ENCODE measurements at regions of chr20 and their contacts with region 1.

Region 1: DNA sequence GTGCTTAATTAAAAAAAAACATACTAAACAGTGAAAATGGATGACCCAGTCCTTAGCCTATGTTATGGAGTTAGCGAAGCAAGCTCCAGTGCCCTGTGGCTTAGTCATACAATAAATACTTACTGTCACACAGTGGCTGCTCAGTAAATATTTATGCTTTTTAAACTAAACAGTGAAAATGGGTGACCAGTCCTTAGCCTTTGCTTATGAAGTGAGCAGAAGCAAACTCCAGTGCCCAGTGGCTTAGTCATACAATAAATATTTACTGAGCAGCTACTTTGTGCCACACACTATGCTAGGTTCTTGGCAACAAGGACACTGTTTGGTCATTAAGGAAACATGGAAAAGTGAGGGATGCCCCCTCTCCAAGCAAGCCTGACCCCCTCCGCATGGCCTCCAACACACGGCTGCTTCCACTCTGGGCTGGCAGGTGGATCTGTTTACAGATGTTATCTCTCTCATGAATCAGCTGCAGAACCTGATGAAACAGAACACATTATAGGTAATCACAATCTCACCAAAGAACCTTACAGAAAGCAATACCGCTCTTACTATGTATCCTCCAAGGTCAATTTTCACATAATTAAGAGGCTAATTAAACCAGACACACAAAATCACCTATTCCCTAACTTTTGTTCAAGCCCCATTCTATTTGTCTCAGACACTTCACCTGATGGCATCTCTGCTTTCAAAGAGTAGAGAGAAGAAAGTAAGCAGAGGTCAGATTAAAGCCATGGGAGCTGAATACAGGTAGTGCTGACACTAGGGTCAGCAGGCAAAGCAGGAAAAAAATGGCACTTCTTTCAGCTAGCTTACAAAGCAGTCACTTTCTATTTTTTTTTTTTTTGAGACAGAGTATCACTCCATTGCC is 27.3 kb downstream of the CDK5RAP1 start:
- DNase-seq: peak; percentile 69 to 97
- H3K4me3 ChIP-seq: no peak overlapping the region
- H3K27ac ChIP-seq: peak overlapping the region; percentile 85
- H3K4me1 ChIP-seq: peaks cover 41% of the 10 kb centered on the region
- H3K27me3 ChIP-seq: no peaks in the 10 kb centered on the region
- CTCF ChIP-seq: no peak

Region 2: DNA sequence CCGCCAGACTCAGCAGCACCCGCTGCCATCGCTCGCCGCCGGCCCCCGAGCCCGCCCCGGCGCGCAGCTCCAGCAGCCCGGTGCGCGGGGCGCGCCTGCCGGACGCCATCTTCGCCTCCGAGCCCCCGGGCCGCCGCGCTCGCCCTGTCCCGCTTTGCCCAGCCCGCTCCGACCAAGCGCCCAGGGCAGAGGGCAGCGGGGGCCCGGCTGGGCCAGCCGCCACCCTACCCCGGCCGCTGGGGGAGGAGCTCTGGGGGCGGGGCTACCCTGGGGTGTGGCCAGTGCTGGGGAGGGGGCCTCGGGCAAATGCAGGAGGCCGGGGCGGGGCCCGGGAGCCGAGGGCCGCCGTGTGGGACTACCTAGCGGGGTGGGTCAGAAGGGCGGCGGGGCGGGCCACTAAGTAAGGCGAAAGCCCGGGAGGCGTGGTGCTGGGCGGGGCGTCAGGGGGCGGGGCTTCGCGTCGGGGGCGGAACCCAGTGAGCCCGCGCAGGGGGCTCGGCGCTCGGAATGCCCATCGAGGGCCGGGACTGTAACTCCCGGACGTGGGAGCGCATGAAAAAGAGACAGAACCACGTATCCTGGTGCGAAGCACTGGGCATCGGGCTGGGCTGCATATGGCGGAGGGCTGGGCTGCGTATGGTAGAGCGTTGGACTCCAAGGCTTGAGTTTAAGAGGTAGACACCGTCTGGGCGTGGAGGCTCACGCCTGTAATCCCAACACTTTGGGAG is 69.7 kb after region 1 on chr20 and contains the start of gene SNTA1:
- CTCF ChIA-PET with region 1: no interaction called
- POLR2A ChIA-PET with region 1: interaction called, 32 read pairs
- intact Hi-C with region 1: no loop called
- DNase-seq: peak; percentile 71 to 94
- H3K4me3 ChIP-seq: peak within 1 kb of the TSS; percentile 71
- H3K27ac ChIP-seq: no peak within 1 kb of the TSS
- H3K4me1 ChIP-seq: peaks cover 4% of the 10 kb centered on the region; the same call in 1 of the 2 replicates
- H3K27me3 ChIP-seq: no peaks in the 10 kb centered on the region
- CTCF ChIP-seq: no peak
- total RNA-seq, gene SNTA1: 7.6 and 10.1 TPM in 2 replicates

Region 3: DNA sequence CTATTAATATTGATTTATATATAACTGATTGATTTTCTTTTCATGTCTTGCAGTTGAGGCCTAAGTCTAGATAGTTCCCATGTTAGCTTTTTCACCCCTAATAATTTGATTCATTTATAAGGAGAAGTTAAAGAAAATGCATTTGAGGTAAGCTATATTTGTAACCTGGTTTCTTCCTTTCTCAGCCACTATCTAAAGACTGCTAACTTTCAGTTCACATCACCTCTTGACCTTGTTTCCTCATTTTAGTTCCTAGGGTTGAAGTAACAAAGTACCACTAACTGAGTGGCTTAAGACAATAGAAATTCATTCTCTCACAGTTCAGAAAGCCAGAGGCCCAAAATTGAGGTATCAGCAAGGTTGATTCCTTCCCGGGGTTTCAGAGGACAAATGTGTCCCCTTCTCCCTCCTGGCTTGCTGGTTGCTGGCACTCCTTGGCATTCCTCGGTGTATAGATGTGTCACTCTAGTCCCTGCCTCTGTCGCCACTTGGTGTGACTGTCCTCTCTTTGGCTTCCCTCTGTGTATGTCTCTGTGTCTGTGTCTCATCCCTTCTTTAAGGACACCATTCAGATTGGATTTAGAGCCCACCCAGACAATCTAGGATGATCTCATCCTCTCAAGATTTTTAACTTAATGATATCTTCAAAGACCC is 232.3 kb after region 1 on chr20:
- CTCF ChIA-PET with region 1: no interaction called
- POLR2A ChIA-PET with region 1: no interaction called
- intact Hi-C with region 1: no loop called
- DNase-seq: no peak
- H3K4me3 ChIP-seq: no peak overlapping the region
- H3K27ac ChIP-seq: no peak overlapping the region
- H3K4me1 ChIP-seq: no peaks in the 10 kb centered on the region
- H3K27me3 ChIP-seq: no peaks in the 10 kb centered on the region
- CTCF ChIP-seq: no peak

Region 4: DNA sequence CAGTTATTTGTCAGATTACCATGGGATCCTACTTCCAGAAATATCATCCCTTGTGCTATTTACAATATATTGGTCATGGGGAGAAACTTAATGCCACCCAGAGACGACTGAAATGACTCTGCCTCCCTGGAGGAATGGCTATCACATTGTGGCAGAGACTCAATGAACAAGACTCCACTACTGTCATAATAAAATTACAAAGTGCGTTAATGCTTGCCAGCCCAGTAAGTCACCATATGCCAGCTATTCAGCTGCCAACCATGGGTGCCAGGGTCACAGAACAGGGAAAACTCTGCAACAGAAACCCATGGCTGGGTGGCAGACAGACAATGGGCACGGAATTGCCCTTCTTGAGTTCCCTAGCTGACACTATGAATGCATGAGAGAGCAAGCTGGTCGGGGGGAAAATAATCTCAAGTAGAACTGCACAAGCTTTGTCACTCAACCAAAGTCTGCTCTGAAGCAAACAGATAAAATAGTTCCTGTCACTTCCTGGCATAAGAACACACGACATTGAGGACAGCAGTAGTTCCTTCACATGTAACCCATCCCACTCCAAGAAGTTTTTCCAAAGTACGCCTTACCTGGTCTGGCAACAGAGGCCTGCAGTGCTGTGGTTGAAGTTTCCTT is 1362.3 kb after region 1 on chr20:
- CTCF ChIA-PET with region 1: no interaction called
- POLR2A ChIA-PET with region 1: interaction called, 13 read pairs
- intact Hi-C with region 1: no loop called
- DNase-seq: no peak
- H3K4me3 ChIP-seq: no peak overlapping the region
- H3K27ac ChIP-seq: no peak overlapping the region
- H3K4me1 ChIP-seq: no peaks in the 10 kb centered on the region
- H3K27me3 ChIP-seq: no peaks in the 10 kb centered on the region
- CTCF ChIP-seq: no peak